ENCODE measurements at regions of chr1 and their contacts with region 1.

Region 1: DNA sequence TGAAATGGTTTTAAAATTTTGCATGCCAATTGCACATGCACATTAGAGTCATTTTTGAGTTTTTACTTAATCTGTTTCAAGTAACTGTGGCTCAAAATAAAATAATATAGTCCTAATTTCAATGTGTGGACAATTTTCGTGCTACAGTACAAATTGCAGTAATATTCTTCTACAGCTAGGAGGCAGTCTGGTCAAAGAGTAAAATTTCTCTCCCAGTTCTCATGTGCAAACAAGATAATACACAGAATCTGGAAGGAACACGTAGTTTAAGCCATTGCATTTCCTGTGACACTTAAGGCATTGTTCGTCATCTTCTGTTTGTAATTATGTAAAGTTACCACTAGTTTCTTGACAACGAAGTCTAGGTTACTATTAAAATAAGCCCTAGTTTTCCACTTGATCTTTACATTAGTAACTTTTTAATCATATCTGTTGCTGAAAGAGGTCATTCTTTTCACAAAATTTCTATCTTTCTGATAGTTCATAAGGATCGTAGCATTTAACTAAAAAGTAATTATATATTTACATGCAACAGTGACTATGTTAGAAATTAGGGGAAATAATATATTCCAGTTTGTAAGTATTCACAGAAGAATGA is 28.9 kb downstream of the ODR4 start:
- DNase-seq: no peak
- ATAC-seq: peak in 1 of 4 donors; percentile 31
- H3K4me3 ChIP-seq: no peak overlapping the region
- H3K27ac ChIP-seq: no peak overlapping the region
- H3K4me1 ChIP-seq: peaks cover 0 to 7% (median 0%) of the 10 kb centered on the region in 12 donors
- H3K27me3 ChIP-seq: no peaks in the 10 kb centered on the region
- CTCF ChIP-seq: peak; percentile 45 to 76 (median 63)
- POLR2A ChIP-seq: no peak

Region 2: GRCh38 chr1:186330758-186331157 is 73.8 kb before region 1 on chr1:
- intact Hi-C with region 1: loop called in 1 of 10 experiments (anchors 10 kb)
- DNase-seq: no peak
- ATAC-seq: no peak
- H3K4me3 ChIP-seq: no peak overlapping the region
- H3K27ac ChIP-seq: no peak overlapping the region
- H3K4me1 ChIP-seq: no peaks in the 10 kb centered on the region
- H3K27me3 ChIP-seq: no peaks in the 10 kb centered on the region
- CTCF ChIP-seq: peak in 6 of 12 donors; percentile 9 to 37 (median 16)
- POLR2A ChIP-seq: no peak